Psoas muscle (tissue), 8 donors: ENCODE measurements at regions of chr18 and their contacts with region 1.

Region 1: DNA sequence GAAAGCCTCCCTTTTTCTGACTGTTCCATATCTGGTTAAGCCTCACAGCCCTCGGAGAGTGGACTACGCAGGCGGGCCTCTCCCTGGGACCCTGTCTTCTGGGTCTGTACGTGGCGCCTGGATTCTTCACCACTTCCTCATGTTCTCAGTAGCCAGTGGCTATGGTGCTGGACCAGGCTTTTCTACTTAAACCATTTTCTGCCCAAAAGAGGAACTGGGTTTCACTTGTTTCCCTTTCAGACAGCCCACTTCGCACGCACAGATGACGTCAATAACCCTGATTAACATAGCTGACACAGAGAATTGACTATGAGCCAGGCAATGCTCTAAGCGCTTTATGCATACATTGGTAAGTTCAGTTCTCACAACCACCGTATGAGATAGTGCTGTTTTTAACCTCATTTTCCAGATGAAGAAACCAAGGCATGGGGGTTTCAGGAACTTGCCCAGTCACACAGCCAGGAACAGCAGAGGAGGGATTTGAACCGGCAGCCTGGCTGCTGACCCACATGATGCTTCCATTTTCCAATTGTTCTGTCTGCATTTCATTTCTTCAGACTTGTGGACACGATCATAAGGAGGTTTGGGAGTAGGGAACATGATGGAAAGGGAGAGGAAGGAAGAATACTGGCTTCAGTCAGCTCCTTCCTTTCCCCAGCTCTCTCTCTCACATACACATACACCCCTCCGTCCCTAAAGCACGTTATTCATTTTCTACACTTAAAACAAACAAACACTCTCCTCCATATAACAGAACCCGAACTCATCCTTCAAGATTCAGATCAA is 41.7 kb downstream of the MYOM1 start:
- DNase-seq: peak in 1 of 2 donors; percentile 43
- ATAC-seq: peak in 1 of 4 donors; percentile 10
- H3K4me3 ChIP-seq: no peak overlapping the region
- H3K27ac ChIP-seq: peak overlapping the region; percentile 80
- H3K4me1 ChIP-seq: peaks cover 11% of the 10 kb centered on the region
- H3K27me3 ChIP-seq: no peaks in the 10 kb centered on the region
- CTCF ChIP-seq: no peak

Region 2: GRCh38 chr18:3217948-3218647 is 40.0 kb after region 1 on chr18:
- intact Hi-C with region 1: loop called in 1 of 2 experiments (anchors 5 kb)
- DNase-seq: no peak
- ATAC-seq: peak; percentile 66 to 70 (median 70)
- H3K4me3 ChIP-seq: peak overlapping the region; percentile 79
- H3K27ac ChIP-seq: peak overlapping the region; percentile 95
- H3K4me1 ChIP-seq: peaks cover 39% of the 10 kb centered on the region
- H3K27me3 ChIP-seq: no peaks in the 10 kb centered on the region
- CTCF ChIP-seq: no peak

Region 3: DNA sequence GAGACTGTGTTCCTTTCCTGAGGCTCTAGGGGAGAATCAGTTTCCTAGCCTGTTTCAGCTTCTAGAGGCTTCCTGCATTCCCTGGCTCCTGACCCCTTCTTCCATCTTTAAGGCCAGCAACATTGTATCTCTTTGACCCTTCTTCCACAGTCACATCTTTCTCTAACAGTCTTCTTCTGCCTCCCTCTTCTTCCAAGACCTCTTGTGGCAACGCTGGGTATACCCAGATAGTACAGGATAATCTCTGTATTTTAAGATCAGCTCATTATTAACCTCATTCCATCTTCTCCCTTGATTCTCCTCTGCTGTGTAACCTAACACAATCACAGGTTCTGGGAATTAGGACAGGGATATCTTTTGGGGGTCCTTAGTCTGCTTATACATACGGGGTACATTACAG is 60.6 kb after region 1 on chr18:
- intact Hi-C with region 1: loop called (anchors 5 kb)
- DNase-seq: no peak
- ATAC-seq: peak in 3 of 4 donors; percentile 21 to 53 (median 50)
- H3K4me3 ChIP-seq: no peak overlapping the region
- H3K27ac ChIP-seq: no peak overlapping the region
- H3K4me1 ChIP-seq: peaks cover 10% of the 10 kb centered on the region
- H3K27me3 ChIP-seq: no peaks in the 10 kb centered on the region
- CTCF ChIP-seq: no peak